PC-9 (cell line): ENCODE measurements at regions of chrX and their contacts with region 1.

Region 1: GRCh38 chrX:30659421-30659820 is 6.2 kb downstream of the GK start:
- DNase-seq: no peak
- H3K4me3 ChIP-seq: no peak overlapping the region
- H3K27ac ChIP-seq: no peak overlapping the region
- H3K4me1 ChIP-seq: no peaks in the 10 kb centered on the region
- H3K27me3 ChIP-seq: no peaks in the 10 kb centered on the region
- CTCF ChIP-seq: no peak

Region 2: DNA sequence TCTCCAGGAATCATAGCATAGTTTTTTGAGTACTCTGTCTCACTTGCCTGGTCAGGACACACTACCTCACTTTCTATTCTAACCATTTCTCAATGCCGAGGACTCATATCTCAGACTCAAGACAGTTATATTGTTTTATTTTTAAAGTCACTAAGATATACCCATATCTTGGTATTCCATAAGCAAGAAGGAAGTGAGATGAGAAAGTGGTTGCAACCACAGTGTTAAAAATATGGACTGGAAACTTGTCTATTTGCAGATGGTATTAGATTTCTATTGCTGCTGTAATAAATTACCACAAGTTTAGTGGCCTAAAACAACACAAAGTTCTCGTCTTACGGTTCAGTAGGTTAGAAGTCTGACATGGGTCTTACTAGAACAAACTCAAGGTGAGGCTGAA is 788.8 kb before region 1 on chrX:
- CTCF ChIA-PET with region 1: interaction called, 12 read pairs
- POLR2A ChIA-PET with region 1: no interaction called
- intact Hi-C with region 1: no loop called
- DNase-seq: no peak
- H3K4me3 ChIP-seq: no peak overlapping the region
- H3K27ac ChIP-seq: no peak overlapping the region
- H3K4me1 ChIP-seq: no peaks in the 10 kb centered on the region
- H3K27me3 ChIP-seq: no peaks in the 10 kb centered on the region
- CTCF ChIP-seq: no peak

Region 3: DNA sequence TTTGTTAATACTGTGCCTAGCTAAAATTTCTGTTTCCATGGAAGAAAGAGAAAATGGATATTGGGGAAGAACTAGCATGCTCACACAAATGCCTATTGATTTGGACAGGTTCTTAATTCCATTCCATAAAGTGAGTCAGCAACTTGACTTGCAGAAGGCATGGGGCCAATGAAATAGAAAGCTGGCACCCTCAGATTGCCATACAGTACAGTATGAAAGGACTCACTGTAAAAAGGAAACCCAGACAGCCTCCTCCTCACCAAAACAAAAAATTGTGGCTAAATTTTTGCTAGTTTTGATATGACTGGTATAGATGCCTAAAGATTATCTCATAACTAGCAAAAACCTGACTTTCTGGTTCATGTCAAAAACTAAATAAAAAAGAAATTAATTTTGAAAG is 240.8 kb after region 1 on chrX:
- CTCF ChIA-PET with region 1: no interaction called
- POLR2A ChIA-PET with region 1: no interaction called
- intact Hi-C with region 1: no loop called
- DNase-seq: peak in 1 of 2 experiments; percentile 47
- H3K4me3 ChIP-seq: no peak overlapping the region
- H3K27ac ChIP-seq: no peak overlapping the region
- H3K4me1 ChIP-seq: peaks cover 21% of the 10 kb centered on the region; the same call in 1 of the 2 replicates
- H3K27me3 ChIP-seq: no peaks in the 10 kb centered on the region
- CTCF ChIP-seq: no peak